ENCODE measurements at regions of chr6 and their contacts with region 1.

Region 1: DNA sequence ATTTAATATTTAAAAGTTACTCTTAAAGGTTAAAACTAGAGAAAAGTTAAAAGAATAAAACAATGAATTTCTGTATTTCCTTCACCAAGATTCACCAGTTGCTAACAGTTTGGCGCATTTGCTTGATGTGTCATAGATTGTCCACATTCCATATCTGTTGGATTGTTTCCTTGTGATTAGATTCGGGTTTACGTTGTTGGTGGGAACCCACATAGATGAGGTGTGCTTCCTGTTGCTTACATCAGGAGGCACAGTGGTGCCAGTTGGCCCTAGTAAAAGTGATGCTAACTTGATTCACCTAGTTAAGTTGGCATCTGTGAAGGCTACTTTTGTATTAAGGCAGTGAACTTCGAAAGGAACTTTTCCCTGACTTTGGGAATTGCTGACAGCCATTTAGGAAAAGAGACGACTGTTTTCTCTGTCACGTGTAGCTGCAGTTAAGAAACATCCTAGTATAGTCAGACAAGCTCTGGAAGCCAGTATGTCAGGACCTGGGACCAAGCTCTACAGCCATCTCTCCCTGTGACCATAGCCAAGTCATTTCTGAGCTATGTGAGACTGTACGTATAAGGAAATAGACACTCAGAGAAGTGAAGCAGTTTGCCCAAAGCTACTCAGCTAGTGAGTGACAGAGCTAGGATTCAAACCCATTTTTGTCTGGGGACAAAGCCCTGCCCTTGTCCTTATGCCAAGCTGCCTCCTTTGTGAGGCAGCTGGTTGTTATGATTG is 49.0 kb downstream of the PPARD start:
- DNase-seq: no peak
- H3K4me3 Mint-ChIP-seq: no peak overlapping the region
- H3K27ac Mint-ChIP-seq: peak overlapping the region; percentile 48
- H3K4me1 Mint-ChIP-seq: peaks cover 45% of the 10 kb centered on the region
- H3K27me3 Mint-ChIP-seq: no peaks in the 10 kb centered on the region

Region 2: DNA sequence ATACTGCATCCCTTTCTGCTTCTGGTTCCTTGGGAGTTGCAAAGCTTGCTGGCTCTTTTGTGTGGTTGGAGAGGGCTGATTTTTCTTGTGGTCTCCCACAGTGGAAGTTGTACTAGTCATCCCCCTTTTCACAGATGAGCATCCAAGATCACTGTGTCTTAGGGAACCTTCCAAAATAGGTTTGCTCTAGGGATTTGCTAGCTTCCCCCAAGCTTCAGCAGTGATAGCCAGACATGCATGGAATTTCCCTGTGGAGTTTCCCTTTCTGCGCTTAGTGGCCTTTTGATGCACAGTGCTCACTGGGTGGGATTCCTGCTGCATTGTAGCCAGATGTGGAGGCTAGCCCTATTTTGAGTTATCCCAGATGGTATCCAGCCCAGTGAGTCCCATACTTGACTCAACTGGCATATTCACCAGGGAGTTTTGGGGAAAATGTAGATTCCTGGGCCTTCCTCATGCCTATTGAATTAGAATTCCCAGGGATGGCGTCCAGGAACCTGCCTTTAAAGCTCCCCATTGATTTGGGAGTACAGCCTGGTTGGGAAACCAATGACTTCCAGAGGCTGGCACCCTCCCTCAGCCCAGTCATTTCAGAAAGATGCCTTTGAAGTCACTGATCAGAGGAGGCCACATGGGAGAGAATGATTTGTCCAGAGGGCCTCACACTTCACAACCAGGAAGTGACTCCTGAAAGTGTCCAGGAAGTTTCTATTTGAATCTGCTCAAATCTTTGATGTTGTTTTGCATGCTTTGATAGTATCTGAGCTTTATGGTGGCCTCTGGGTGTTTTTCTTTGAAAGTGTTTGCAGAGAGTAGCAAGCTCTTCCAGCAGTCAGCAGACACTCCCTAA is 23.1 kb before region 1 on chr6:
- intact Hi-C with region 1: loop called (anchors 2 kb)
- DNase-seq: peak; percentile 20
- H3K4me3 Mint-ChIP-seq: no peak overlapping the region
- H3K27ac Mint-ChIP-seq: peak overlapping the region; percentile 50
- H3K4me1 Mint-ChIP-seq: peaks cover 56% of the 10 kb centered on the region
- H3K27me3 Mint-ChIP-seq: no peaks in the 10 kb centered on the region

Region 3: GRCh38 chr6:35474131-35474940 is 82.9 kb after region 1 on chr6:
- intact Hi-C with region 1: no loop called
- DNase-seq: no peak
- H3K4me3 Mint-ChIP-seq: no peak overlapping the region
- H3K27ac Mint-ChIP-seq: no peak overlapping the region
- H3K4me1 Mint-ChIP-seq: peaks cover 29% of the 10 kb centered on the region
- H3K27me3 Mint-ChIP-seq: no peaks in the 10 kb centered on the region

Measured in activated T-helper 1 cell treated with anti-CD3 and anti-CD28 coated beads, Interleukin-12 subunit alpha, Interleukin-12 subunit beta, Interleukin-2, Interleukin-4 antibody, amounts not matched to agents 30 ng/mL and 10 ng/mL and 1 ng/mL, durations not matched to agents 14 hours and 24 hours and 36 hours (primary cell).